CD8-positive, alpha-beta T cell (primary cell): ENCODE measurements at regions of chr14 and their contacts with region 1.

Region 1: DNA sequence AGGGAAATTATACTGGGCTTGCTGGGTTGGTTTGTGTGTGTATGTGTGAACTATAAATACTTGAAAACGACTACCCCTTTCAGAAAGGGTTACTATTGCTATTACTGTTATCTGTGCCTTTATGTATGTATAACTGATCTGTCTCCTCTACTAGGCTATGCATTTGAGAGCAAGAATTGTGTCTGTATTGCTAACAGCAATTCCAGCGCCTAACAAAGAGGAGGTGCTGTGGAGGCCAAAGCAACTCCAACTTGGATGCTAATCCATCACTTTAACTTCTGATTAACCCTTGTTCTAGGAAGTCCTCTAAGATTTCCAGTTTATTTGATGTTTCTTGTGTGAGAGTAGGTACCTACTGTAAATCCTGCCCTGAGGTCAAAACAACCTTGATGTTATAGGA is 313.9 kb downstream of the PCNX1 start:
- DNase-seq: no peak
- ATAC-seq: no peak
- H3K4me3 ChIP-seq: no peak overlapping the region
- H3K4me3 Mint-ChIP-seq: no peak overlapping the region
- H3K27ac ChIP-seq: no peak overlapping the region
- H3K27ac Mint-ChIP-seq: no peak overlapping the region
- H3K4me1 ChIP-seq: no peaks in the 10 kb centered on the region
- H3K4me1 Mint-ChIP-seq: peaks cover 3% of the 10 kb centered on the region
- H3K27me3 ChIP-seq: no peaks in the 10 kb centered on the region
- H3K27me3 Mint-ChIP-seq: no peaks in the 10 kb centered on the region
- CTCF ChIP-seq: no peak

Region 2: GRCh38 chr14:70600382-70601157 is 620.5 kb before region 1 on chr14 and contains the start of gene MED6:
- CTCF ChIA-PET with region 1: no interaction called
- POLR2A ChIA-PET with region 1: no interaction called
- intact Hi-C with region 1: no loop called
- DNase-seq: peak; percentile 83 to 96 (median 94)
- ATAC-seq: peak; percentile 100
- H3K4me3 ChIP-seq: peak within 1 kb of the TSS; percentile 90 to 99
- H3K4me3 Mint-ChIP-seq: peak within 1 kb of the TSS; percentile 99
- H3K27ac ChIP-seq: peak within 1 kb of the TSS; percentile 92 to 96
- H3K27ac Mint-ChIP-seq: peak within 1 kb of the TSS; percentile 99
- H3K4me1 ChIP-seq: peaks cover 20% of the 10 kb centered on the region
- H3K4me1 Mint-ChIP-seq: peaks cover 30% of the 10 kb centered on the region
- H3K27me3 ChIP-seq: no peaks in the 10 kb centered on the region
- H3K27me3 Mint-ChIP-seq: no peaks in the 10 kb centered on the region
- CTCF ChIP-seq: no peak
- total RNA-seq, gene MED6: 116 to 119 TPM

Region 3: GRCh38 chr14:71261206-71261605 is 40.1 kb after region 1 on chr14:
- CTCF ChIA-PET with region 1: no interaction called
- POLR2A ChIA-PET with region 1: no interaction called
- intact Hi-C with region 1: loop called in 1 of 2 experiments (anchors 2 kb)
- DNase-seq: no peak
- ATAC-seq: no peak
- H3K4me3 ChIP-seq: no peak overlapping the region
- H3K4me3 Mint-ChIP-seq: no peak overlapping the region
- H3K27ac ChIP-seq: no peak overlapping the region
- H3K27ac Mint-ChIP-seq: no peak overlapping the region
- H3K4me1 ChIP-seq: no peaks in the 10 kb centered on the region
- H3K4me1 Mint-ChIP-seq: no peaks in the 10 kb centered on the region
- H3K27me3 ChIP-seq: no peaks in the 10 kb centered on the region
- H3K27me3 Mint-ChIP-seq: peaks cover 2% of the 10 kb centered on the region
- CTCF ChIP-seq: no peak